Activated T-helper 1 cell treated with anti-CD3 and anti-CD28 coated beads, Interleukin-12 subunit alpha, Interleukin-12 subunit beta, Interleukin-2, Interleukin-4 antibody, amounts not matched to agents 30 ng/mL and 10 ng/mL and 1 ng/mL, durations not matched to agents 14 hours and 24 hours and 36 hours (primary cell): ENCODE measurements at regions of chr2 and their contacts with region 1.

Region 1: GRCh38 chr2:69683101-69683971 is 39.8 kb upstream of the AAK1 start:
- DNase-seq: no peak
- H3K4me3 Mint-ChIP-seq: peak overlapping the region; percentile 27
- H3K27ac Mint-ChIP-seq: peak overlapping the region; percentile 83
- H3K4me1 Mint-ChIP-seq: peaks cover 51% of the 10 kb centered on the region
- H3K27me3 Mint-ChIP-seq: no peaks in the 10 kb centered on the region

Region 2: DNA sequence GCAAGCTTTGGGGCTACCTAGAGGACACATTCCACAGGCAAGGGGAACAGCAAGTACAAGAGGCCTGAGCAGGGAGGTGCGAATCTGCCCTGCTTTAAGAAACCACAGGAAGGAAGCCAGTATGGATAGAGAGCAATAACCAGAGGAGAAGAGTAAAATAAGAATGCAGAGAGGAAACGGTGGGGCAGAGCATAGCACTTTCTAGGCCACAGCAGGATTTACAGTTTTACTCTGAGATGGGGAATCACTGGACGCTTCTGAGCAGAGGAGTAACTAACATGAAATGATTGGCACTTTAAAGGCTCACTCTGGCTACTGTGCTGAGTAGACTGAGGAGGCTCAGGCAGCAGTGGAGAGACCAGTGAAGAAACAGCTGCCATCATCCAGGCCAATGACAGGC is 63.6 kb before region 1 on chr2:
- intact Hi-C with region 1: loop called (anchors 2 kb)
- DNase-seq: peak; percentile 23
- H3K4me3 Mint-ChIP-seq: no peak overlapping the region
- H3K27ac Mint-ChIP-seq: no peak overlapping the region
- H3K4me1 Mint-ChIP-seq: peaks cover 35% of the 10 kb centered on the region
- H3K27me3 Mint-ChIP-seq: no peaks in the 10 kb centered on the region

Region 3: GRCh38 chr2:69667805-69668382 is 15.4 kb before region 1 on chr2:
- intact Hi-C with region 1: loop called (anchors 2 kb)
- DNase-seq: no peak
- H3K4me3 Mint-ChIP-seq: no peak overlapping the region
- H3K27ac Mint-ChIP-seq: no peak overlapping the region
- H3K4me1 Mint-ChIP-seq: no peaks in the 10 kb centered on the region
- H3K27me3 Mint-ChIP-seq: no peaks in the 10 kb centered on the region

Region 4: DNA sequence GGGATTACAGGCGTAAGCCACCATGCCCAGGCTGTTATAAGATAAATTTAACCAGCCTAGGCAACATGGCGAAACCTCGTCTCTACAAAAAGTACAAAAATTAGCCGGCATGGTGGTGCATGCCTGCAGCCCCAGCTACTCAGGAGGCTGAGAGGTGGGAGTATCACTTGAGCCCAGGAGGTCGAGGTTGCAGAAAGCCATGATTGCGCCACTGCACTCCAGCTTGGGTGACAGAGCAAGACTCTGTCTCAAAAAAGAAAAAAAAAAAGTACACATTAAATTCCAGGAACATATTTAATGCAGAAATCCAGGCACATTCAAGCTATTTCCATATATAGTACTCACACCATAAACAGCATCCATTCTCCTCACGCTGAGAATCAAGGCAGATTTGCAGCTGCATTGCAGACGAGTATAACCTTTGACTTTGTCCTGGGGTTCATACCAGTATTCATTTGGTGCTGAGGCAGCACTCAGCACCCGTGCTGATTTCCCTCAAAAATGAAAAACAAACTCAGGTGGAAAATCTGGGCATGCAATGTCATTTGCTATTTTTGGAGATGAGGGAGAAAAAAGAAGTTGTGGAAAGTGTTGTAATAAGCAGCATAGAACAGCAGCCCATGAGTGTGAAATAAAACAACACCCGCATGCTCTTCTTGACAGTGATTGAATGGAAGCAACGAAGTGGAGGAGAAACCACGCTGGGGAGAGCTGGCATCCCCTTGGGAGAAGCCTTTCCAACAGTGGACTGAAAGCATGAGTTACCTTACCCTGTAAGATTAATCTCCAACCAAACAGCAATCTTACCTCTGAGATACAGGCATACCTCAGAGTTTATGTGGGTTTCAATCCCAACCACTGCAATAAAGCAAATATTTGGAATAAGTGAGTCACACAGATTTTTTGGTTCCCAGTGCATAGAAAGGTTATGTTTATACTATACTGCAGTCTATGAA is 11.8 kb after region 1 on chr2:
- intact Hi-C with region 1: loop called (anchors 1 kb)
- DNase-seq: no peak
- H3K4me3 Mint-ChIP-seq: peak overlapping the region; percentile 2
- H3K27ac Mint-ChIP-seq: peak overlapping the region; percentile 63
- H3K4me1 Mint-ChIP-seq: peaks cover 80% of the 10 kb centered on the region
- H3K27me3 Mint-ChIP-seq: no peaks in the 10 kb centered on the region